ENCODE measurements at regions of chr1 and their contacts with region 1.

Region 1: DNA sequence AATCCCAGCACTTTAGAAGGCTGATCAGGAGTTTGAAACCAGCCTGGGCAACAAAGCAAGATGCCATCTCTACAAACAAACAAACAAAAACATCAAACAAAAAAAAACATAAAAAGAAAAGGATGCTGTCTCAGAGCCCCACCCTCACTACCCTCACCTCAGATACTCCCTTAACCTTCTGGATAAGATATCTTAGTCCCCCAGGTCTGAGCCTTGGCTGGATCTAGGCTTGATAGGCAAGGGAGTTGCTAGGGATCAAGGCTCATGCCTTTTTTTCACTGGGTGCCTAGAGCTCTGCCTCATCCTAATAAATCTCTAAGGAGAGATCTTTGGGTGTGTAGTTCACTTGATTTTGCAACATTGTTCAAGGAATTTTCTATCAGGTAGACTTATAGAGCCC is 7.4 kb downstream of the HDAC1 start:
- DNase-seq: no peak
- ATAC-seq: no peak
- H3K4me3 ChIP-seq: no peak overlapping the region
- H3K4me3 Mint-ChIP-seq: no peak overlapping the region
- H3K27ac ChIP-seq: peak overlapping the region; percentile 4 to 15
- H3K27ac Mint-ChIP-seq: peak overlapping the region; percentile 62
- H3K4me1 ChIP-seq: peaks cover 54% of the 10 kb centered on the region
- H3K4me1 Mint-ChIP-seq: peaks cover 73% of the 10 kb centered on the region
- H3K27me3 ChIP-seq: no peaks in the 10 kb centered on the region
- H3K27me3 Mint-ChIP-seq: no peaks in the 10 kb centered on the region
- CTCF ChIP-seq: no peak

Region 2: DNA sequence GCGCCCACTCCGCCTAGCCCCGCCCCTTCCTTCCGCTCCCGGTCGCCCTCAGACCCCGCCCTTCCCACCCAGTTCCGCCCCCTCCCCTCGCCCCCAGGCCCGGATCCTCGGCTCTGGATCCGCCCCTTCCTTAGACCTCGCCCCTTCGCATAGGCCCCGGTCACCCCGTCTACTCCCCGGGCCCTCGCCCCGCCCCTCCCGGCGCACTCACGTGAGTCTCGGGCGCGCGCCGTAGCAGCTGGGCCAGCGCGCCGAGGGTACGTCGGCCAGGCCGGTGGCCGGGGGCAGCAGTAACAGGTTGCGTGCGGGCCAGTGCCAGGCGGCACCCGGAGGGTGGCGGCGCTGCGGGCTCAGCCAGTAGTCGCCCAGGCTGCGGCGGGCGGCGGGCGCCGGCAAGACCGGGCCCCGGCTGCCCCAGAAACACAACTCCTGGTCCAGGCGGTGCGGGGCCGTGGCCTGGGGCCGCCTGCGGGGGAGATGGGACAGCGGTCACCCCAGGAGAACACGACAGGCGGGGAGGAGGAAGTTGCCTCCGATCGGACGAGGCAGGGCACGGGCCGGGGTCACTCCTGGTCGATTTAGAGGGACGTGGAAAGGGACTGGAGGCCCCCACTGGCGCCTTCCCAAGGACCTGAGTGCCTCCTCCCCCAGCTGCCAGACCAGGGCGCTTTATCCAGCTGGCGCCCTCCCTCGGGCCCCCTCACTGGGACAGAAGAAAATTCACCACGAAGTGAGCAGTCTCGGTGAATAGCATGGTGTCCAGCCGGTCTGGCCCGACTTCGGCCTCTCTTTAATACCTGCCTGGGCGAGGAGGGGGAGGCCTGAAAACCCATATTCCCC is 52.3 kb after region 1 on chr1:
- CTCF ChIA-PET with region 1: no interaction called
- POLR2A ChIA-PET with region 1: no interaction called
- intact Hi-C with region 1: loop called in 1 of 2 experiments (anchors 5 kb)
- DNase-seq: peak; percentile 84 to 97 (median 90)
- ATAC-seq: peak; percentile 95
- H3K4me3 ChIP-seq: peak overlapping the region; percentile 66
- H3K4me3 Mint-ChIP-seq: peak overlapping the region; percentile 87
- H3K27ac ChIP-seq: peak overlapping the region; percentile 53 to 78
- H3K27ac Mint-ChIP-seq: peak overlapping the region; percentile 76
- H3K4me1 ChIP-seq: peaks cover 48% of the 10 kb centered on the region
- H3K4me1 Mint-ChIP-seq: peaks cover 51% of the 10 kb centered on the region
- H3K27me3 ChIP-seq: no peaks in the 10 kb centered on the region
- H3K27me3 Mint-ChIP-seq: no peaks in the 10 kb centered on the region
- CTCF ChIP-seq: no peak